ENCODE measurements at regions of chr19 and their contacts with region 1.

Region 1: GRCh38 chr19:39328046-39328705 is 7.5 kb upstream of the LRFN1 start:
- DNase-seq: peak; percentile 62
- H3K4me3 ChIP-seq: no peak overlapping the region
- H3K27ac ChIP-seq: no peak overlapping the region
- H3K4me1 ChIP-seq: no peaks in the 10 kb centered on the region
- H3K27me3 ChIP-seq: no peaks in the 10 kb centered on the region
- CTCF ChIP-seq: peak; percentile 95 to 97
- POLR2A ChIP-seq: no peak

Region 2: DNA sequence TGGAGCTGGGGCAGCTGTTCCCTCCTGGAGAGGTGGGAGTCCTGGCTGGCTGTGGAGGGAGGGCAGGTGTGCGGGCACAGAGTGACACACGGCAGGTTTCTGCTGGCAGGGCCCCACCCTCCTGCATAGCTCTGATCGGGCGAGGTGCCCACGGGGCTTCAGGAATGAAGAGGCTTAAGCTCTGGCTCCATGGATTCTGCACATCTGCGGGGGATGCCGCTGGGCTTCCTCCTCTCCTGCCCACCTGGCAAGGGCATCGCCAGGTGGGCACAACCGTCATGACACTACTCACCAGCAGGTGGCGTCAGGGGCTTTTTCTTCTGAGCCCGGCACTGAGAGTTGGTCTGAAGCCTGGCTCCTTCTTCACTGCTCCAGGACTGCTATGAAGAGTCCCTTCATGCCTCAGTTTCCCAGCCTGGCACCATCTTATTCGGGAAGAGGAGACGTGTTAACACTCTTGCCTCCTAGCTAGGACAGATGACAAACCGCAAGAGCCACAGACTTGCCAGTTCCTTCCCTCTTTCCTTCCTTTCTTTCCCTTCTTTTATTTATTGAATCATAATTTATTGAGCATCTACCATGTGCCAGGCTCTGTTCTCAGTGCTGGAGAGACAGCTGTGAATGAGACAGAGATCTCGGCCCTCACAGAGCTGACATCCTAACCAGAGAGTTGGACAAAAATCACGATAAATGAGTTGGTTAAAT is 217.8 kb before region 1 on chr19:
- CTCF ChIA-PET with region 1: interaction called, 9 read pairs
- POLR2A ChIA-PET with region 1: no interaction called
- dilution Hi-C with region 1: no loop called
- intact Hi-C with region 1: loop called (anchors 1 kb)
- DNase-seq: peak; percentile 28
- H3K4me3 ChIP-seq: no peak overlapping the region
- H3K27ac ChIP-seq: no peak overlapping the region
- H3K4me1 ChIP-seq: no peaks in the 10 kb centered on the region
- H3K27me3 ChIP-seq: peaks cover 0 to 2% of the 10 kb centered on the region in 2 experiments
- CTCF ChIP-seq: peak; percentile 77 to 84
- POLR2A ChIP-seq: no peak

Region 3: DNA sequence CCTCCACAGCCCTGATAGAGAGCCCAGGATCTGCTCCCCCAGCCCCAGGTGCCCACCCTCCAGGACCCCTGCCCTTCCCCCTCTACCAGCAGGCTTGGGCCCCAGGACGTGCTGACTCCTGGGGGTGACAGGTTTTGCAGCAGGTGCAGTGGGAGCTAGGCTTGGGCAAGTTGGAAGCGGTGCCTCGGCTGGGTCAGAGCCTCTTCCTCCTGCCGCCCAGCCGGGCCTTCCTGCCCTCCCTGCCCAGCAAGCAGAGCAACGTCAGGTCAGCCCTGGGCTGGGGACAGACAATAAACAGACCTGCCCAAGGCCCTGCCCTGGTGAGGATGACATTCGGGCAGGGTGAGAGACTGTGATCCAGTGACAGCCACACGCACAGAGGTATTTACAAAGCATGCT is 140.6 kb before region 1 on chr19:
- CTCF ChIA-PET with region 1: interaction called, 3 read pairs
- POLR2A ChIA-PET with region 1: no interaction called
- dilution Hi-C with region 1: no loop called
- intact Hi-C with region 1: loop called (anchors 1 kb)
- DNase-seq: no peak
- H3K4me3 ChIP-seq: no peak overlapping the region
- H3K27ac ChIP-seq: no peak overlapping the region
- H3K4me1 ChIP-seq: peaks cover 5% of the 10 kb centered on the region
- H3K27me3 ChIP-seq: peaks cover 4 to 7% of the 10 kb centered on the region in 2 experiments
- CTCF ChIP-seq: no peak
- POLR2A ChIP-seq: no peak

Region 4: GRCh38 chr19:39212375-39212742 is 115.8 kb before region 1 on chr19:
- CTCF ChIA-PET with region 1: interaction called, 12 read pairs
- POLR2A ChIA-PET with region 1: no interaction called
- dilution Hi-C with region 1: no loop called
- intact Hi-C with region 1: loop called (anchors 1 kb)
- DNase-seq: no peak
- H3K4me3 ChIP-seq: no peak overlapping the region
- H3K27ac ChIP-seq: no peak overlapping the region
- H3K4me1 ChIP-seq: no peaks in the 10 kb centered on the region
- H3K27me3 ChIP-seq: peaks cover 0 to 2% of the 10 kb centered on the region in 2 experiments
- CTCF ChIP-seq: peak in 1 of 2 donors; percentile 18
- POLR2A ChIP-seq: no peak

Region 5: DNA sequence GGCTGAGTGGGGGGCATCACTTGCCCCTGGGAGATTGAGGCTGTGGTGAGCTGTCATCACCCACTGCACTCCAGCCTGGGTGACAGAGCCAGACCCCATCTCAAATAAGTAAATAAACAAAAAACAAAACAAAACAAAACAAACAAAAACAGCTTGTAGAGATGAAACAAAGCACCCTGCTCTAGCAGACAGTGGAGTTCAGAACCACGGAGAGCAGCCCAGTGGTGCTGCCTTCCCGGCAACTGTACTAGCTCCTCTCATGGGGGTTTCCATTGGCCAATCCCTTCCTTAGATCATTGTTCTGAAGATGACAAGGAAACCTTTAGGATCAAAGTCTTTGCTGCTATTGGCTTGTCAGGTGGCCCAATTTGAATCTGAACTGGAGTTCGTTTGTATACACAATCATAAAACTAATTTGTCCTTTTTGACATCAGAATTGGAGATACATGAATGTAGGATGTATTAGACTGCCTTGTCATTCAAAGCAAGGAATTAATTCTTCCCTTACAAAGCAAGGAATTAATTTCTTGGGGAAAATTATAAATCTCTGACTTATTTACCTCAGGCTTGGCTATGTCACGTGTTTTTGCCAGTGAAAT is 104.4 kb before region 1 on chr19:
- CTCF ChIA-PET with region 1: no interaction called
- POLR2A ChIA-PET with region 1: no interaction called
- dilution Hi-C with region 1: no loop called
- intact Hi-C with region 1: no loop called
- DNase-seq: peak; percentile 22
- H3K4me3 ChIP-seq: no peak overlapping the region
- H3K27ac ChIP-seq: no peak overlapping the region
- H3K4me1 ChIP-seq: no peaks in the 10 kb centered on the region
- H3K27me3 ChIP-seq: no peaks in the 10 kb centered on the region
- CTCF ChIP-seq: no peak
- POLR2A ChIP-seq: no peak

Region 6: GRCh38 chr19:39351537-39352064 is 23.4 kb after region 1 on chr19:
- CTCF ChIA-PET with region 1: no interaction called
- POLR2A ChIA-PET with region 1: no interaction called
- dilution Hi-C with region 1: no loop called
- intact Hi-C with region 1: no loop called
- DNase-seq: no peak
- H3K4me3 ChIP-seq: no peak overlapping the region
- H3K27ac ChIP-seq: no peak overlapping the region
- H3K4me1 ChIP-seq: peaks cover 7% of the 10 kb centered on the region
- H3K27me3 ChIP-seq: no peaks in the 10 kb centered on the region
- CTCF ChIP-seq: no peak
- POLR2A ChIP-seq: no peak